ENCODE measurements at regions of chr20 and their contacts with region 1.

Region 1: GRCh38 chr20:10536531-10536930 is 101.4 kb downstream of the SLX4IP start:
- DNase-seq: peak; percentile 31 to 48 (median 38)
- H3K4me3 ChIP-seq: peak overlapping the region in 2 of 7 experiments; percentile 2 to 21
- H3K27ac ChIP-seq: no peak overlapping the region
- H3K4me1 ChIP-seq: peaks cover 0 to 39% (median 12%) of the 10 kb centered on the region in 4 experiments
- H3K27me3 ChIP-seq: no peaks in the 10 kb centered on the region

Region 2: GRCh38 chr20:10453241-10453640 is 83.3 kb before region 1 on chr20:
- CTCF ChIA-PET with region 1: interaction called, 11 read pairs
- POLR2A ChIA-PET with region 1: no interaction called
- DNase-seq: peak; percentile 87 to 96 (median 93)
- H3K4me3 ChIP-seq: peak overlapping the region in 3 of 7 experiments; percentile 12 to 58 (median 53)
- H3K27ac ChIP-seq: peak overlapping the region in 1 of 2 experiments; percentile 76
- H3K4me1 ChIP-seq: peaks cover 13 to 58% (median 28%) of the 10 kb centered on the region in 4 experiments
- H3K27me3 ChIP-seq: no peaks in the 10 kb centered on the region

Region 3: GRCh38 chr20:10469599-10469998 is 66.9 kb before region 1 on chr20:
- CTCF ChIA-PET with region 1: interaction called, 113 read pairs
- POLR2A ChIA-PET with region 1: no interaction called
- DNase-seq: peak; percentile 83 to 93 (median 92)
- H3K4me3 ChIP-seq: peak overlapping the region in 1 of 7 experiments; percentile 31
- H3K27ac ChIP-seq: no peak overlapping the region
- H3K4me1 ChIP-seq: peaks cover 4 to 56% (median 24%) of the 10 kb centered on the region in 4 experiments
- H3K27me3 ChIP-seq: no peaks in the 10 kb centered on the region

Region 4: GRCh38 chr20:10511509-10512251 is 24.9 kb before region 1 on chr20:
- CTCF ChIA-PET with region 1: interaction called, 39 read pairs
- POLR2A ChIA-PET with region 1: no interaction called
- DNase-seq: peak; percentile 98 to 99 (median 99)
- H3K4me3 ChIP-seq: peak overlapping the region in 4 of 7 experiments; percentile 11 to 58 (median 32)
- H3K27ac ChIP-seq: peak overlapping the region; percentile 64 to 81
- H3K4me1 ChIP-seq: peaks cover 33 to 90% (median 77%) of the 10 kb centered on the region in 4 experiments
- H3K27me3 ChIP-seq: no peaks in the 10 kb centered on the region

Region 5: GRCh38 chr20:10521068-10521831 is 15.3 kb before region 1 on chr20:
- CTCF ChIA-PET with region 1: interaction called, 39 read pairs
- POLR2A ChIA-PET with region 1: no interaction called
- DNase-seq: peak in 2 of 3 donors; percentile 40 to 57
- H3K4me3 ChIP-seq: peak overlapping the region in 3 of 7 experiments; percentile 13 to 36 (median 28)
- H3K27ac ChIP-seq: peak overlapping the region in 1 of 2 experiments; percentile 18
- H3K4me1 ChIP-seq: peaks cover 0 to 41% (median 20%) of the 10 kb centered on the region in 4 experiments
- H3K27me3 ChIP-seq: no peaks in the 10 kb centered on the region

Region 6: DNA sequence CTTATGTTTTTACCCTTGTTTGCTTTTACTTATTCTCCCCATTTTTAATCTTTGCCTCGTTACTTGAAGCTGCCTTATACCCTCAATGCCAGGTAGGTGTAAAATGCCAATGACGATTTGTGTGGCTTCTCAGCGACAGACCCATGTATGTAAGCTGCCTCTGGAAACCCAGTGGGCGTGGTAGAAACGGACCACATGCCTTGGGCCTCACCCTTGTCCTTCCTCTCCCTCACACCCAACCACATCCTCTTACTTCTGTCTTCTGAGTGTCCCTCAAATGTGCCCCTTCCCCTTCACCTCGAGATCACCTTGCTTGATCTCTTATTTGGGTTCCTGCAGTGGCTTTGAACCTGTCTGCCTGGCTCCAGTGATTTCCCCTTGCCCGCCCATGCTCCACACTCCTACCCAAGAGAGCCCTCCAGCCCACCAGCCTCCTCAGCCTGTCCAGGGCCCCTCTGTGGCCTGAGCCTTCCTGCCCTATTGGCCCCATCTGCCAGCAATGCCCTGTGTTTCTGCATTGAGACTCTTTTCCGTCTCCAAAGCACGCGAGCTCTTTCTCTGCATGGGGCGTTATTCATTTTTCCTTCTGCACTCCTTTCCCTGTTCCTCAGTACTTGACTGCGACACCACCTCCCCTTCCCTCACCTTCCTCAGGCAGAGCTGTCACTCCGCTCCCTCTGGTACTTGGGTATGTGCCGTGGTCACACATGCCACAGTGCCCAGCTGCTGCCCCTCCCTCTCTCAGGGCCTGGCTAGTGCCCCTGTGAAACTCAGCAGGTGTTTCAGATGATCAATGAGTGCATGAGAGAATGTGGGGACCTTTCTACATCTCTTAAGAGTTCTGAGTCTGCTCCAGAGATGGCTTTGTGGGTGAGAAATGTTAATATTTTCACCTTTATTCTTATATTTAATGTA is 13.9 kb after region 1 on chr20:
- CTCF ChIA-PET with region 1: interaction called, 13 read pairs
- POLR2A ChIA-PET with region 1: no interaction called
- DNase-seq: peak in 2 of 3 donors; percentile 43 to 60
- H3K4me3 ChIP-seq: peak overlapping the region in 3 of 7 experiments; percentile 6 to 28 (median 21)
- H3K27ac ChIP-seq: no peak overlapping the region
- H3K4me1 ChIP-seq: peaks cover 9 to 41% (median 24%) of the 10 kb centered on the region in 4 experiments
- H3K27me3 ChIP-seq: no peaks in the 10 kb centered on the region